ENCODE measurements at regions of chr9 and their contacts with region 1.

Region 1: DNA sequence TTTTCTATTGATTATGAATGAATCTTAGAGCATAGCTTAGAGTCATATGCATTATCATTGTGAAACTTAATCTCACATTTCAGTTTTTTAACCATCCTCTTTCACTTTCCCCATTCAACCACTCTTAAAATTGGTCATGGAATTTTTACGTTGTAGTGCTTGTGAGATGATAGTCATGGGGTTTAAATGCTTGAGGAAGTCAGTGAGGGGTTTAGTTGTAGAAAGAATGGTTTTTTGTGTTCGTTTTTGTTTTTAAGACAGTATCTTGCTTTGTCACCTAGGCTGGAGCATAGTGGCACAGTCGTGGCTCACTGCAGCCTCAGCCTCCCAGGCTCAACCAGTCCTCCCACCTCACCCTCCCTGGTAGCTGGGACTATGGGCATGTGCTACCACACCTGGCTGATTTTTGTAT is 19.6 kb downstream of the UGCG start:
- DNase-seq: no peak

Region 2: GRCh38 chr9:111957856-111958652 is 41.8 kb after region 1 on chr9:
- intact Hi-C with region 1: loop called (anchors 5 kb)
- DNase-seq: no peak